Naive thymus-derived CD4-positive, alpha-beta T cell (primary cell): ENCODE measurements at regions of chr1 and their contacts with region 1.

Region 1: GRCh38 chr1:183543619-183544204 is 46.5 kb downstream of the NCF2 start:
- DNase-seq: peak in 7 of 9 donors; percentile 34 to 61 (median 48)
- ATAC-seq: peak; percentile 91
- H3K4me3 ChIP-seq: no peak overlapping the region
- H3K4me3 Mint-ChIP-seq: no peak overlapping the region
- H3K27ac ChIP-seq: no peak overlapping the region
- H3K27ac Mint-ChIP-seq: peak overlapping the region in 6 of 9 donors; percentile 1 to 50 (median 4)
- H3K4me1 ChIP-seq: no peaks in the 10 kb centered on the region
- H3K4me1 Mint-ChIP-seq: peaks cover 4 to 13% (median 10%) of the 10 kb centered on the region in 7 donors
- H3K27me3 ChIP-seq: no peaks in the 10 kb centered on the region
- H3K27me3 Mint-ChIP-seq: no peaks in the 10 kb centered on the region

Region 2: GRCh38 chr1:183281553-183282091 is 262.1 kb before region 1 on chr1:
- CTCF ChIA-PET with region 1: interaction called, 3 read pairs
- POLR2A ChIA-PET with region 1: no interaction called
- intact Hi-C with region 1: loop called (anchors 1 to 2 kb)
- DNase-seq: peak; percentile 42 to 69 (median 49)
- ATAC-seq: peak; percentile 73
- H3K4me3 ChIP-seq: no peak overlapping the region
- H3K4me3 Mint-ChIP-seq: no peak overlapping the region
- H3K27ac ChIP-seq: no peak overlapping the region
- H3K27ac Mint-ChIP-seq: peak overlapping the region in 1 of 9 donors; percentile 60
- H3K4me1 ChIP-seq: no peaks in the 10 kb centered on the region
- H3K4me1 Mint-ChIP-seq: peaks cover 0 to 14% (median 3%) of the 10 kb centered on the region in 7 donors
- H3K27me3 ChIP-seq: no peaks in the 10 kb centered on the region
- H3K27me3 Mint-ChIP-seq: peaks cover 0 to 10% (median 5%) of the 10 kb centered on the region in 5 donors

Region 3: GRCh38 chr1:183515018-183515689 is 28.6 kb before region 1 on chr1:
- CTCF ChIA-PET with region 1: no interaction called
- POLR2A ChIA-PET with region 1: no interaction called
- intact Hi-C with region 1: loop called in 1 of 2 experiments (anchors 2 kb)
- DNase-seq: no peak
- ATAC-seq: no peak
- H3K4me3 ChIP-seq: no peak overlapping the region
- H3K4me3 Mint-ChIP-seq: no peak overlapping the region
- H3K27ac ChIP-seq: no peak overlapping the region
- H3K27ac Mint-ChIP-seq: peak overlapping the region in 4 of 9 donors; percentile 7 to 59 (median 30)
- H3K4me1 ChIP-seq: no peaks in the 10 kb centered on the region
- H3K4me1 Mint-ChIP-seq: peaks cover 12 to 31% (median 14%) of the 10 kb centered on the region in 7 donors
- H3K27me3 ChIP-seq: no peaks in the 10 kb centered on the region
- H3K27me3 Mint-ChIP-seq: no peaks in the 10 kb centered on the region

Region 4: DNA sequence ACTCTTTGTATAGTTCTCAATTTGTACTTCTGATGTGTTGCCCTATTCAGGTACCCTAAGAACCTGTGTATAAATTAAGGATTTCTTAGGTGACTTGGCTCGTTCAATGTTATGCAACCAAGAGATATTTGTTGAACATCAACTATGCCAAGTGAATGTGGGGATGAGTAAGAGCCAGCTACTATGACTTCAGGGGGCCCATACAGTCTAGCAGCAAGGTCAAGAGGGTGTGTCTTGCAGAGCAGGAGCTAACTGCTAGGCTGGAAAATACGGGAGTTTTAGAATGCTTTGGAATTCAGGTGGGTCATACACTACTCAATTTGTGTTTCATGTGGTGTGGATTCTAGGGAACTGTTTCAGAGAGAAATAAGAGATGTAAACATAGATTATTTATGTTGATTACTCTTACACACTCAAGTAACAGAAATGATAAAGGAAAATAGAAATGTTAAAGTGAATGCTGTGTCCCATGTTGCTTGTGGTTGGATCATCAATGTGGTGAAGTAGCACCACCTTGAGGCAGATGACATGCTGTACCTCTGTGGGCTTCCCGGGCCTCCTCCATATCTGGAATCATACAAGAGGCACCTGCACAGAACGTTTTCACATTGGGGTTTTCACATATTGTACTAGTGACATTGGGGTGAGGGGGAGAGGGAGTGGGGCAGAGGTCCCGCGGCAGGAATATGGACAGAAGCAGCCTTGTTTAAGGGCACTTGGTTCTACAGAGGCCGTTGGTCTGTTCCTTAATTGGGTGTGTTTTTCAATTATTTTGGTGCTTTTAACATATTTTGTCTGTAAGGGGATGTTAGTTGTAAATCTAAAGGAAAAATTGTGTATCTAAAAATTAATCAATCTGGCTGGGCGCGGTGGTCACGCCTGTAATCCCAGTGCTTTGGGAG is 79.4 kb after region 1 on chr1:
- CTCF ChIA-PET with region 1: no interaction called
- POLR2A ChIA-PET with region 1: no interaction called
- intact Hi-C with region 1: loop called (anchors 1 to 2 kb)
- DNase-seq: peak in 7 of 9 donors; percentile 38 to 67 (median 43)
- ATAC-seq: peak; percentile 96
- H3K4me3 ChIP-seq: no peak overlapping the region
- H3K4me3 Mint-ChIP-seq: no peak overlapping the region
- H3K27ac ChIP-seq: peak overlapping the region; percentile 37
- H3K27ac Mint-ChIP-seq: peak overlapping the region; percentile 1 to 76 (median 58)
- H3K4me1 ChIP-seq: peaks cover 0 to 5% of the 10 kb centered on the region in 2 donors
- H3K4me1 Mint-ChIP-seq: peaks cover 10 to 48% (median 20%) of the 10 kb centered on the region in 7 donors
- H3K27me3 ChIP-seq: no peaks in the 10 kb centered on the region
- H3K27me3 Mint-ChIP-seq: no peaks in the 10 kb centered on the region